ENCODE measurements at regions of chr12 and their contacts with region 1.

Region 1: GRCh38 chr12:96516472-96517430 is 27.4 kb downstream of the CFAP54 start:
- DNase-seq: peak; percentile 59
- ATAC-seq: peak; percentile 54
- H3K4me3 Mint-ChIP-seq: no peak overlapping the region
- H3K27ac Mint-ChIP-seq: no peak overlapping the region
- H3K4me1 Mint-ChIP-seq: peaks cover 21% of the 10 kb centered on the region
- H3K27me3 Mint-ChIP-seq: no peaks in the 10 kb centered on the region
- CTCF ChIP-seq: no peak

Region 2: DNA sequence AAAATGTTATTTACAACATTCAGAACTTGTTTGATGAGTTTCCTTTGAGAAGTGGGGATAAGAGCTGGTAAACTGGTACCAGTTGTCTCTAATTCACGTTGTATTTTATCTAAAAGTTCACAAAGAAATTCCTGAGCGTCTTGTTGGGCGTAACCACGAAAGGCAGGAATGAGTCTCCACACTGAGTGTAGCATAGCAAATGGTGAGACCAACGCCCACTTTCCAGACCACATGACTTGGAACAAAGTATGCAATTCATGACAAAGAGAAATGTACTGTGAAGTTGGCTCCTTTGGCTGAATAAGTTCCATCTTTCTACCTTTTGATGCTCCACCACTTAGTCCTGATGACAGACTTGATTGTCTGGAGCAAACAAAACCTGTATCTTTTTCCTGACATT is 983.9 kb before region 1 on chr12:
- CTCF ChIA-PET with region 1: no interaction called
- POLR2A ChIA-PET with region 1: no interaction called
- intact Hi-C with region 1: loop called (anchors 1 kb)
- DNase-seq: no peak
- ATAC-seq: no peak
- H3K4me3 Mint-ChIP-seq: no peak overlapping the region
- H3K27ac Mint-ChIP-seq: no peak overlapping the region
- H3K4me1 Mint-ChIP-seq: no peaks in the 10 kb centered on the region
- H3K27me3 Mint-ChIP-seq: no peaks in the 10 kb centered on the region
- CTCF ChIP-seq: no peak

Region 3: DNA sequence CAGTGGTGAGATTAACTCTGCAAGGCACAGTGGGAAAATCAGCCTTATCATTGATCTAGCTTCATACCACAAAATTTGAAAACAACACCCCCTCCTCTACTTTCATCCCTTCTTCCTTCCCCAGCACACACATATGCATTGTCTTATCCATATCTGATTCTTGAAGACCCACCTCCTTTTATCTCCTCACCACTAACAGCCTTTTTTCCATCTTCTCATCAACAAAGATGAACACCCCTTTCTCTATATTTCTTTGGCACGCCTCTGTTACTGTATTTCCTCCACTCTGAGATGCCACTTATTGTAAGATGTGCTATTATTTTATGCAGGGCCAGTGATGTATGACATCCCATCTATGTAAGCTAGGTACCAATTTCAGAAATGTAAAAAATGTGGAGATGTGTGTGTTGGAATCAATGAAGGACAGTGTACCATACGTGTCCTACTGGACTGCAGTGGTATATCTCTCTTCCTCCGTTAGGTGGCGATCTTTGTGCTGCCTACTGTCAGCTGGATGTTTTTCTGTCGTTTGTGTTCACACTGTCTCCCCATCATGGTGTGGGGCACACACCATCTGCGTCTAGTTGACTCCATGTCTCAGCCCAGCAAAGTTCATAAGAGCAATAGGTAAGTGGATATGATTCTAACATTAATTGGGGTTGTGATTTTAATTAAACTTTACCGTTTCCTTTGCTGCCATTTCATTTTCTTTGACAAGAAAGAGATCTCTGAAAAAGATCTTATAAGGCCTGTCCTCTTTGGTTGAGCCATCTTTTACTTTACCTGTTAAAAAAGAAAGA is 598.4 kb before region 1 on chr12:
- CTCF ChIA-PET with region 1: interaction called, 21 read pairs
- POLR2A ChIA-PET with region 1: no interaction called
- intact Hi-C with region 1: loop called (anchors 1 kb)
- DNase-seq: no peak
- ATAC-seq: peak; percentile 82
- H3K4me3 Mint-ChIP-seq: no peak overlapping the region
- H3K27ac Mint-ChIP-seq: no peak overlapping the region
- H3K4me1 Mint-ChIP-seq: no peaks in the 10 kb centered on the region
- H3K27me3 Mint-ChIP-seq: peaks cover 6% of the 10 kb centered on the region
- CTCF ChIP-seq: peak; percentile 43

Region 4: GRCh38 chr12:96112733-96113132 is 404.0 kb before region 1 on chr12:
- CTCF ChIA-PET with region 1: no interaction called
- POLR2A ChIA-PET with region 1: no interaction called
- intact Hi-C with region 1: no loop called
- DNase-seq: no peak
- ATAC-seq: no peak
- H3K4me3 Mint-ChIP-seq: no peak overlapping the region
- H3K27ac Mint-ChIP-seq: no peak overlapping the region
- H3K4me1 Mint-ChIP-seq: peaks cover 23% of the 10 kb centered on the region
- H3K27me3 Mint-ChIP-seq: no peaks in the 10 kb centered on the region
- CTCF ChIP-seq: no peak

Region 5: GRCh38 chr12:96208801-96209549 is 307.8 kb before region 1 on chr12:
- CTCF ChIA-PET with region 1: interaction called, 77 read pairs
- POLR2A ChIA-PET with region 1: no interaction called
- intact Hi-C with region 1: no loop called
- DNase-seq: peak; percentile 54
- ATAC-seq: peak; percentile 81
- H3K4me3 Mint-ChIP-seq: peak overlapping the region; percentile 64
- H3K27ac Mint-ChIP-seq: peak overlapping the region; percentile 82
- H3K4me1 Mint-ChIP-seq: peaks cover 99% of the 10 kb centered on the region
- H3K27me3 Mint-ChIP-seq: no peaks in the 10 kb centered on the region
- CTCF ChIP-seq: no peak

Region 6: GRCh38 chr12:96489103-96490056 is 27.4 kb before region 1 on chr12 and contains the start of gene CFAP54:
- CTCF ChIA-PET with region 1: interaction called, 18 read pairs
- POLR2A ChIA-PET with region 1: interaction called, 5 read pairs
- intact Hi-C with region 1: loop called (anchors 1 kb)
- DNase-seq: peak; percentile 91
- ATAC-seq: peak; percentile 90
- H3K4me3 Mint-ChIP-seq: peak within 1 kb of the TSS; percentile 90
- H3K27ac Mint-ChIP-seq: peak within 1 kb of the TSS; percentile 82
- H3K4me1 Mint-ChIP-seq: peaks cover 22% of the 10 kb centered on the region
- H3K27me3 Mint-ChIP-seq: no peaks in the 10 kb centered on the region
- CTCF ChIP-seq: peak; percentile 65
- total RNA-seq, gene CFAP54: 0.44 and 0.64 TPM in 2 replicates

Region 7: GRCh38 chr12:96658124-96658725 is 141.5 kb after region 1 on chr12:
- CTCF ChIA-PET with region 1: no interaction called
- POLR2A ChIA-PET with region 1: no interaction called
- intact Hi-C with region 1: no loop called
- DNase-seq: no peak
- ATAC-seq: no peak
- H3K4me3 Mint-ChIP-seq: no peak overlapping the region
- H3K27ac Mint-ChIP-seq: no peak overlapping the region
- H3K4me1 Mint-ChIP-seq: no peaks in the 10 kb centered on the region
- H3K27me3 Mint-ChIP-seq: no peaks in the 10 kb centered on the region
- CTCF ChIP-seq: no peak

Measured in activated B cell treated with CpG ODN at 0.5 μM for 24 hours (primary cell).